PC-9 (cell line): ENCODE measurements at regions of chr10 and their contacts with region 1.

Region 1: GRCh38 chr10:72834183-72834825 is 59.2 kb upstream of the OIT3 start:
- DNase-seq: peak; percentile 49 to 62
- H3K4me3 ChIP-seq: no peak overlapping the region
- H3K27ac ChIP-seq: no peak overlapping the region
- H3K4me1 ChIP-seq: 0 out of 2 replicates have a peak, but pooled peaks cover 10% of the 10 kb centered on the region
- H3K27me3 ChIP-seq: no peaks in the 10 kb centered on the region
- CTCF ChIP-seq: peak; percentile 88

Region 2: GRCh38 chr10:72364239-72364777 is 470.0 kb before region 1 on chr10:
- CTCF ChIA-PET with region 1: interaction called, 4 read pairs
- POLR2A ChIA-PET with region 1: interaction called, 4 read pairs
- intact Hi-C with region 1: loop called (anchors 1 kb)
- DNase-seq: peak; percentile 82 to 92
- H3K4me3 ChIP-seq: no peak overlapping the region
- H3K27ac ChIP-seq: peak overlapping the region; percentile 71
- H3K4me1 ChIP-seq: peaks cover 15% of the 10 kb centered on the region
- H3K27me3 ChIP-seq: no peaks in the 10 kb centered on the region
- CTCF ChIP-seq: peak; percentile 97

Region 3: DNA sequence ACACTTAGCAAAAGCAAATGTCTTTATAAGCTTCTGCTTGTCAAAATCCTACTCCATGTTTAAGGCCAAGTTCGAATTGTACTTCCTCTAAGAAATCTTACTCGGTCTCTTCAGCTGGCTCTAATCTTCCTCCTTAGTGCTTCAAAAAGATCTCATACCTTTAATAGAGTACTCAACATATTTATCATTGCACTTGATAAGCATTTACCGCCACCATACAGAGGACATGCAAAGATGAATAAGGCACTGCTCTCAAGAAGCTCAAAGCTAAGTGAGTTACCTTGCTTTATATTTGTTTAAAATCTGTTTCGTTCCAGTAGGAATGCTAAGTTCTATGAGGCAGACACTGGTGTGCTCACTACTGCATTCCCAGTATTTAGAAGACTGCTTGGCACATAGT is 417.6 kb before region 1 on chr10:
- CTCF ChIA-PET with region 1: interaction called, 15 read pairs
- POLR2A ChIA-PET with region 1: no interaction called
- intact Hi-C with region 1: no loop called
- DNase-seq: no peak
- H3K4me3 ChIP-seq: no peak overlapping the region
- H3K27ac ChIP-seq: no peak overlapping the region
- H3K4me1 ChIP-seq: no peaks in the 10 kb centered on the region
- H3K27me3 ChIP-seq: no peaks in the 10 kb centered on the region
- CTCF ChIP-seq: no peak

Region 4: GRCh38 chr10:72625608-72626443 is 208.5 kb before region 1 on chr10 and contains the start of gene MICU1:
- CTCF ChIA-PET with region 1: interaction called, 3 read pairs
- POLR2A ChIA-PET with region 1: no interaction called
- intact Hi-C with region 1: loop called (anchors 2 kb)
- DNase-seq: peak; percentile 90 to 96
- H3K4me3 ChIP-seq: peak within 1 kb of the TSS; percentile 80
- H3K27ac ChIP-seq: peak within 1 kb of the TSS; percentile 19
- H3K4me1 ChIP-seq: peaks cover 18% of the 10 kb centered on the region
- H3K27me3 ChIP-seq: no peaks in the 10 kb centered on the region
- CTCF ChIP-seq: no peak
- total RNA-seq, gene MICU1: 65.3 and 70.5 TPM in 2 replicates

Region 5: GRCh38 chr10:73060738-73061635 is 226.7 kb after region 1 on chr10:
- CTCF ChIA-PET with region 1: no interaction called
- POLR2A ChIA-PET with region 1: no interaction called
- intact Hi-C with region 1: loop called (anchors 2 kb)
- DNase-seq: no peak
- H3K4me3 ChIP-seq: no peak overlapping the region
- H3K27ac ChIP-seq: no peak overlapping the region
- H3K4me1 ChIP-seq: no peaks in the 10 kb centered on the region
- H3K27me3 ChIP-seq: no peaks in the 10 kb centered on the region
- CTCF ChIP-seq: peak; percentile 80